B cell (primary cell): ENCODE measurements at regions of chr10 and their contacts with region 1.

Region 1: GRCh38 chr10:123144697-123145541 is 3.0 kb upstream of the HMX2 start:
- DNase-seq: peak; percentile 56
- ATAC-seq: no peak
- H3K4me3 ChIP-seq: no peak overlapping the region
- H3K4me3 Mint-ChIP-seq: no peak overlapping the region
- H3K27ac ChIP-seq: no peak overlapping the region
- H3K27ac Mint-ChIP-seq: no peak overlapping the region
- H3K4me1 ChIP-seq: peaks cover 64 to 87% of the 10 kb centered on the region in 2 donors
- H3K4me1 Mint-ChIP-seq: peaks cover 41% of the 10 kb centered on the region
- H3K27me3 ChIP-seq: peaks cover 6 to 97% (median 85%) of the 10 kb centered on the region in 4 experiments
- H3K27me3 Mint-ChIP-seq: peaks cover 70% of the 10 kb centered on the region
- CTCF ChIP-seq: no peak

Region 2: GRCh38 chr10:122999347-122999746 is 145.6 kb before region 1 on chr10:
- CTCF ChIA-PET with region 1: no interaction called
- POLR2A ChIA-PET with region 1: no interaction called
- intact Hi-C with region 1: no loop called
- DNase-seq: no peak
- ATAC-seq: no peak
- H3K4me3 ChIP-seq: no peak overlapping the region
- H3K4me3 Mint-ChIP-seq: no peak overlapping the region
- H3K27ac ChIP-seq: no peak overlapping the region
- H3K27ac Mint-ChIP-seq: no peak overlapping the region
- H3K4me1 ChIP-seq: peaks cover 0 to 9% of the 10 kb centered on the region in 2 donors
- H3K4me1 Mint-ChIP-seq: peaks cover 23% of the 10 kb centered on the region
- H3K27me3 ChIP-seq: no peaks in the 10 kb centered on the region
- H3K27me3 Mint-ChIP-seq: no peaks in the 10 kb centered on the region
- CTCF ChIP-seq: no peak

Region 3: DNA sequence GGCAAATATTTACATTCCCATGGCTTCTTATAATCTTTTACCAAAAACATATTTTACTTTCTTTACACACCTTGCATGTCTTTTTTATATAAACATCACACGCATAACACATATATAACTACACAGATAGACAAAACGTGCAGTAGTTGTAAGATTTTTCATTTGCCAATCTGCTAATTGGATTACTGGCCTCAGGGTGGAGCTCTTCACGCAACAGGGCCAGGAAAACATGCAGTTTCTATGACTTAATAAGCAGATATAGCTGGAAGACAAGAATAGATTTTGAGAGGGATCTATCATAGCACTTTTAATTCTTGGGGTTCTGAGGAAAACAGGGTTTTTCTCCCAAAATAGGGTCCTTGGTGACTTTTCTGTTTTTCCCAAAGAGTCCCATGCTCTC is 123.4 kb before region 1 on chr10:
- CTCF ChIA-PET with region 1: no interaction called
- POLR2A ChIA-PET with region 1: no interaction called
- intact Hi-C with region 1: no loop called
- DNase-seq: no peak
- ATAC-seq: no peak
- H3K4me3 ChIP-seq: no peak overlapping the region
- H3K4me3 Mint-ChIP-seq: no peak overlapping the region
- H3K27ac ChIP-seq: no peak overlapping the region
- H3K27ac Mint-ChIP-seq: no peak overlapping the region
- H3K4me1 ChIP-seq: peaks cover 0 to 4% of the 10 kb centered on the region in 2 donors
- H3K4me1 Mint-ChIP-seq: peaks cover 13% of the 10 kb centered on the region
- H3K27me3 ChIP-seq: no peaks in the 10 kb centered on the region
- H3K27me3 Mint-ChIP-seq: no peaks in the 10 kb centered on the region
- CTCF ChIP-seq: no peak

Region 4: DNA sequence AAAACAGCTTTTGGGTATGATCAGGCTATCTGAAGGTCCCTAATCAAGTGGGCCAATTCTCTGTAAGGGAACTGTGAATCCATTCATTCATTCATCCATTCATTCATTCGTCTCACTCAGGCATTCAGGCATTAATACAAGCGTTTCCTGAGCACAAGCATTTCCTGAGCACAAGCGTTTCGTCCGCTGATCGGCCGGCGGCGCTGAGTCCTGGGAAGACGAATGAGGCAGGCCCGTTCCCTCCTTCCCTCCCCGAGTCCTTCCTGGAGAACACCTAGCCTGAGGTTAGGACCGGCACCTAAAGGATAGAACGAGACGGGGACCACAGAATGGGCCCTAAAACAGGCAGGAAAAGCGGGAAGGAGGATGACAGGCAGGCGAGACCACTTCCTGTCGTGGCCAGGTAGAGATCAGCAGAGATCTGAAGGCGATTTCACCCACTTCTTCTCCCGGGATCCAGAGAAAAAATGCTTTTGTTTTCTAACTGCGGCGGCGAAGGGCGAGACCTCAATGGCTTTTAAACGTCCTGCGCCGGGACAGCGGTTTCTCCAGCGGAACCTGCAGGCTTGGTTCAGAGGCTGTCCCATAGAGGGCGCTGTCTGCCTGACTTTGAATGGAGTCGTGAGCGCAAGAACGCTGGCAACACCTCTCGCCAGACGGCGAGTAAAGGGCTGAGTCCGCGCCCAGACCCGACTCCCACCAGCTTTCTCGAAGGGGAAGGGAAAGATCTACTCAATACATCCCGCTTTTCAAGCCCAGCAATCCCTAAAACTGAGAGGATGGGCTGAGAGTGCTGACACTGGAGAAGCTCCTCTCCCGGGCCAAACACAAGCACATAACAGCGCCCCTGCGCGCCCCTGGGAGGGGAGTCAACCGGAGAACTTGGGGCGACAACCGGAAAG is 12.1 kb before region 1 on chr10:
- CTCF ChIA-PET with region 1: interaction called, 22 read pairs
- POLR2A ChIA-PET with region 1: interaction called, 3 read pairs
- intact Hi-C with region 1: loop called (anchors 1 kb)
- DNase-seq: peak; percentile 84
- ATAC-seq: peak; percentile 66
- H3K4me3 ChIP-seq: peak overlapping the region in 2 of 5 experiments; percentile 11 to 28
- H3K4me3 Mint-ChIP-seq: peak overlapping the region; percentile 84
- H3K27ac ChIP-seq: no peak overlapping the region
- H3K27ac Mint-ChIP-seq: peak overlapping the region; percentile 84
- H3K4me1 ChIP-seq: peaks cover 48 to 52% of the 10 kb centered on the region in 2 donors
- H3K4me1 Mint-ChIP-seq: peaks cover 32% of the 10 kb centered on the region
- H3K27me3 ChIP-seq: peaks cover 0 to 88% (median 70%) of the 10 kb centered on the region in 4 experiments
- H3K27me3 Mint-ChIP-seq: peaks cover 69% of the 10 kb centered on the region
- CTCF ChIP-seq: peak; percentile 85

Region 5: DNA sequence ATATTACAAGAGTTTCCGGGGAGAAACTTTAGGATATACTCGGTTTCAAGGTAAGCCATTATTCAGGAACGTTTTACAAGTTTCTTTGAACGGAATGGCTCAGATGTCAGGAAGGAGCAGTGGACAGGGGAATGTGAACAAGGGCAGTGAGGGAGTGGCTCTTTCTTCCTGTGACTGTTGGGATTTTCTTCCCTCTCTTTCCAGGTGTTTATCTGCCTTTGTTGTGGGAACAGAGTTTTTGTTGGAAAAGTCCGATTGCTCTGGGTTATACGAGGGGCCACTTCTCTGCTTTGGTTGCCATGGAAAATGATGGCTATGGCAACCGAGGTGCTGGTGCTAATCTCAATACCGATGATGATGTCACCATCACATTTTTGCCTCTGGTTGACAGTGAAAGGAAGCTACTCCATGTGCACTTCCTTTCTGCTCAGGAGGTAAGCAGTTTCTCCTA is 1838.4 kb after region 1 on chr10:
- CTCF ChIA-PET with region 1: no interaction called
- POLR2A ChIA-PET with region 1: no interaction called
- intact Hi-C with region 1: no loop called
- DNase-seq: no peak
- ATAC-seq: no peak
- H3K4me3 ChIP-seq: no peak overlapping the region
- H3K4me3 Mint-ChIP-seq: no peak overlapping the region
- H3K27ac ChIP-seq: no peak overlapping the region
- H3K27ac Mint-ChIP-seq: no peak overlapping the region
- H3K4me1 ChIP-seq: no peaks in the 10 kb centered on the region
- H3K4me1 Mint-ChIP-seq: no peaks in the 10 kb centered on the region
- H3K27me3 ChIP-seq: no peaks in the 10 kb centered on the region
- H3K27me3 Mint-ChIP-seq: no peaks in the 10 kb centered on the region
- CTCF ChIP-seq: no peak